ENCODE measurements at regions of chr12 and their contacts with region 1.

Region 1: DNA sequence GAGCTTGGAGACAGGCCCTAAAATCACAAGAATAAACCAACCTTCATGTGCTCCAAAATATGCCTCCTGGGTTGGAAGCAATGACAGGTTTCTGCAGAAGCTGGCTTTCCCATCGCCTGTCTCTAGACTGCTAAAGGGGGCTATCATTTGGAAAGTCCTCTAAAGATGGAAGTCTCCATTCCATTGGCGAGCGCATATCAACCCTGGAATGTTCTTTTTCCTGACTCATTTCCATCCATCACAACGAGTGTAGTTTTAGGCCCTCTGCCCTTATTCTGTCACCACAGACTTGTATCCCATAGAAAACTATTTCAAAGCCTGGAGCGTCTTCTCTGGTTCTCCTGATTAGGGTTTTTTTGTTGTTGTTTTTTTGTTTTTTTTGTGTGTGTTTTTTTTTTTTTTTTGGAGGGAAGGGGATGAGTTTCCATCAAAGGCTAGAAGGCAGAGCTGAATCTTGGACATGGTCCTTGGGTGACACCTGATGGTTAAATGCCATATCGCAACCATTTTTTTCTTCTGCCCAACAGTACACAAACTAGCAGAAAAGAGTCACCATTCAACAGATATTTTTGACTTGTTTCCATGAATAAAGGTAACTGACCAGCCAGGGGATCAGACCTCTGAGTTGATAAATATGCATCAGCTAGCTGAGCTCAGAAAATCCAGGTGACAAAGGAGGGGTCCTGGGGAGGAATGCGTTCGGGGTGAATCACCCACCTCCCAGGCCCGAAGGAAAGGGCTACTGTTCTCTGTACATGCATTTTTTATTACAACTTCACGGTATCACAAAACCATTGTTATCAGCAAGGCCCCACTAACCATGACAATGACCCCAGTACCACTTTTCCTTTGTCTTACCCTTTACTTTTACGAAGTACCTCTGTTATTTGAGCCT is 40.5 kb downstream of the KCNA5 start:
- DNase-seq: no peak
- H3K4me3 ChIP-seq: no peak overlapping the region
- H3K27ac ChIP-seq: no peak overlapping the region
- H3K4me1 ChIP-seq: no peaks in the 10 kb centered on the region
- H3K27me3 ChIP-seq: peaks cover 0 to 14% (median 0%) of the 10 kb centered on the region in 7 donors
- CTCF ChIP-seq: peak; percentile 37 to 95 (median 71)
- POLR2A ChIP-seq: no peak

Region 2: GRCh38 chr12:4857472-4858291 is 226.5 kb before region 1 on chr12:
- intact Hi-C with region 1: loop called (anchors 10 kb)
- DNase-seq: peak; percentile 85
- H3K4me3 ChIP-seq: peak overlapping the region in 2 of 8 donors; percentile 17 to 55
- H3K27ac ChIP-seq: no peak overlapping the region
- H3K4me1 ChIP-seq: peaks cover 8 to 21% (median 12%) of the 10 kb centered on the region in 6 donors
- H3K27me3 ChIP-seq: peaks cover 0 to 62% (median 13%) of the 10 kb centered on the region in 7 donors
- CTCF ChIP-seq: peak; percentile 46 to 89 (median 79)
- POLR2A ChIP-seq: no peak

Region 3: DNA sequence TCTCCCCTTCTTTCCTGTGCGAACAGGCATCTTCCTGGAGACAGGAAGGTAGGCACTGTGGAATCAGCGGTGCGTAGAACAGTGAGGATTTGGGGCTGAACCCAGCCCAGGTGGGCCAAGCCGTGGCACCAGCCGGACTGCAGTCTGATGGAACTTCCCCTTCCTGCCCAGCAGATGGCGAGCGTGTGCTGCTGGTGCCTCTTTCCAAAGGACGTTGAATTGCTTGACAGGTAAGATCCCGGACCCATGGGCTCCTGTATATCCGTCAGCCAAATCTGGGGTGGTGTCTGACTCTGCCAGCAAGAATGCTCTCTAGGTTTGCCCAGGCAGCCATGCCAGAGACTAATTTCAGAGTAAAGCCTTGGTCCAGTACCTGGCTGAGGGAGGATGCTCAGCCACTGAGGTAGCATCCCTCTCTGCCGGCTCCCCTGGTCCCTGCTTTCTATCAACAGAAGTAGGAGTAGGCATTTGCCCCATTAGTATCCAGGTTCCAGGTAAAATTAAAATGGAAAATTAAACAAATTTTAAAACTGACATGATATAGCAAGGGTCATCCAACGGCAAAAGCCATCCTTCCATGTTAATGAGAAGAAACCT is 61.6 kb before region 1 on chr12:
- intact Hi-C with region 1: loop called (anchors 2 kb)
- DNase-seq: peak; percentile 82
- H3K4me3 ChIP-seq: no peak overlapping the region
- H3K27ac ChIP-seq: no peak overlapping the region
- H3K4me1 ChIP-seq: peaks cover 0 to 6% (median 0%) of the 10 kb centered on the region in 6 donors
- H3K27me3 ChIP-seq: peaks cover 0 to 20% (median 0%) of the 10 kb centered on the region in 7 donors
- CTCF ChIP-seq: peak; percentile 75 to 92 (median 87)
- POLR2A ChIP-seq: no peak

Region 4: GRCh38 chr12:5134861-5135525 is 50.8 kb after region 1 on chr12:
- intact Hi-C with region 1: no loop called
- DNase-seq: no peak
- H3K4me3 ChIP-seq: no peak overlapping the region
- H3K27ac ChIP-seq: no peak overlapping the region
- H3K4me1 ChIP-seq: no peaks in the 10 kb centered on the region
- H3K27me3 ChIP-seq: peaks cover 0 to 34% (median 4%) of the 10 kb centered on the region in 7 donors
- CTCF ChIP-seq: no peak
- POLR2A ChIP-seq: no peak